ENCODE measurements at regions of chr4 and their contacts with region 1.

Region 1: DNA sequence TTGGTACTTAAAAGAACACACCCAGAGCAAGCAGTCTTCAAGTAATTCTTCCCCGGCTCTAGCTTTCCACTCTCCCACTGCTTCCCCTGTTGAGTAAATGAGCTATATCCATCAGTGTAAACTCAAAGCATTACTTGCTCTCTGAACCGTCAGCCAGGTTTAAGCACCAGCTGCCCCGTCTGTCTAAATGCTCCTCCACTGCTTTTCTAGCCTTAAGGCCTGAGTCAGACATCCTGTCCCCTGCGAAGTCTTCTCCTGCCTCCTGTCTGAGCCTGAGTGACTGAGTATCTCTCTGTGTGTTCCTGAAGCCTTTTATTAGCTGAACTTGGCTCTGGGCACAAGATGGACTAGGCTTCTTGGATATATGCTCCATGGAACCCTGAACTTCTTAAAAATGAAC is 205.1 kb downstream of the STK32B start:
- DNase-seq: no peak
- H3K4me3 ChIP-seq: no peak overlapping the region
- H3K27ac ChIP-seq: no peak overlapping the region
- H3K4me1 ChIP-seq: no peaks in the 10 kb centered on the region
- H3K27me3 ChIP-seq: no peaks in the 10 kb centered on the region
- CTCF ChIP-seq: no peak

Region 2: GRCh38 chr4:5267408-5267807 is 11.0 kb after region 1 on chr4:
- CTCF ChIA-PET with region 1: no interaction called
- POLR2A ChIA-PET with region 1: interaction called, 10 read pairs
- intact Hi-C with region 1: no loop called
- DNase-seq: peak; percentile 17
- H3K4me3 ChIP-seq: no peak overlapping the region
- H3K27ac ChIP-seq: no peak overlapping the region
- H3K4me1 ChIP-seq: no peaks in the 10 kb centered on the region
- H3K27me3 ChIP-seq: no peaks in the 10 kb centered on the region
- CTCF ChIP-seq: no peak